ENCODE measurements at regions of chr3 and their contacts with region 1.

Region 1: GRCh38 chr3:122356415-122356814 is 26.6 kb downstream of the MIX23 start:
- H3K4me3 ChIP-seq: no peak overlapping the region
- H3K27ac ChIP-seq: no peak overlapping the region
- H3K4me1 ChIP-seq: no peaks in the 10 kb centered on the region
- CTCF ChIP-seq: peak; percentile 32; the same call in 1 of the 2 replicates

Region 2: GRCh38 chr3:122101646-122102045 is 254.8 kb before region 1 on chr3:
- CTCF ChIA-PET with region 1: interaction called, 15 read pairs
- POLR2A ChIA-PET with region 1: no interaction called
- H3K4me3 ChIP-seq: no peak overlapping the region
- H3K27ac ChIP-seq: no peak overlapping the region
- H3K4me1 ChIP-seq: no peaks in the 10 kb centered on the region
- CTCF ChIP-seq: 0 out of 2 replicates have a peak, but pooled peaks have one; percentile 13

Region 3: DNA sequence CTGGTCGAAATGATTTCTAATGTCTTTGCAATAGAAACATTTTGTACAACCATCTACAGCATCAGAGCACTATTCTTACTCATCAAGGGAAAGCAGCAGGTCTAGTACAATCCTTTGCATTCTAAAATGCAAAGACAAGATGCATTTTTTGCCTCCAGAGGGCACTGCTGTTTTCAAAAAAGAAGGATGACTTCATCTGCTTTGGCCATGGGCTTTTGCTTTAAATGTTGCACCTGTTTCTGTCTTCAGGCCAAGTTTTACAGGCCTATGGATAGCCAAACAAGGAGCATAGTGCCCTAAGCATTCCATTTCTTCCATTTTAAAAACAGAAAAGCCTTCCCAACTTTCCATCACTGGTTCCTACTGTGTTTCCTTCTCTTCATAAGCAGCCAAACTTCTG is 204.3 kb after region 1 on chr3:
- CTCF ChIA-PET with region 1: no interaction called
- POLR2A ChIA-PET with region 1: no interaction called
- H3K4me3 ChIP-seq: no peak overlapping the region
- H3K27ac ChIP-seq: no peak overlapping the region
- H3K4me1 ChIP-seq: no peaks in the 10 kb centered on the region
- CTCF ChIP-seq: no peak

Measured in HEK293 (cell line).